Ovary (tissue), 10 donors: ENCODE measurements at regions of chr16 and their contacts with region 1.

Region 1: DNA sequence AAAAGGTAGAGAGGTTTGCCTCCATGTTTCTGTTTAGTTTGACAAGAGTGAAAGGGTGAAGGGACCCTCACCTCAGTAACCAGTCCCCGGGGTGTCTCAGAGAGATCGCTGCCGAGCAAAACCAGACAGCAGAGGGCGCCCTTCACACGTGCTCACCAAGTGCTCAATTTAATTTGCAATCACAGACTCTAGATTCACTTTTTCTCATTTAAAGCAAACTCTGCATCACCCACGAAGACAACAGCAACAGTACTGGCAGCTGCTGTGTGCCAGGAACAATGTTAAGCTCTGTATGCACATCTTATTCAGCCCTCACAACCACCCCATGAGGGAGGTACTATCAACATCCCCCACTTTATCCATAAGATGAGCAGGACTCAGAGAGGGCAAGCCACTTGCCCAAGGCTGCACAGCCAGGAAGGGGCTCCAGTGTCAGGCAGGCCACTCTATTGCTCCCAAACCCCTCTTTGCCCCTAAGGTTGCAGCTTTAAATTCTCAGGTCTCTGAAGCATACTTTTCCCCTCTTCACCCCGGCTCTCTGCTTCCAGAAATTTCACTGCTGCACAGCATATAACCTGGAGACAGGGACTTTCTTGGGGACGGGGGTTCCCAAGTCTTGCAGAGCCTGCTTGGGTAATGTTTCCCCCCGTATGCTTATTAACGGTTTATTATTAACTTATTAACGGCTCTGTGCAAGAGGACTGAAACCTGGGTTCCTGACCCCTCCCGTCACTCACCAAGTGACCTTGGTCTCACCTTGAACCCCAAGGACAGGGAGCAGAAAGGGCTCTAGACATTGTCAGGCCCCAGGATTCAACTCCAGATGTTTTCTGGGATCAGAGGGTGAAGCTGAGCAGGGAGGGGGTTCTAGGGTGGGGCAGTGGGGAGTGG is 70.9 kb downstream of the CNGB1 start:
- DNase-seq: peak; percentile 49 to 77 (median 67)
- H3K4me3 ChIP-seq: no peak overlapping the region
- H3K27ac ChIP-seq: no peak overlapping the region
- H3K4me1 ChIP-seq: no peaks in the 10 kb centered on the region
- H3K27me3 ChIP-seq: no peaks in the 10 kb centered on the region
- CTCF ChIP-seq: peak; percentile 31 to 49 (median 49)
- EP300 ChIP-seq: no peak
- POLR2A ChIP-seq: no peak

Region 2: GRCh38 chr16:57994778-57995177 is 94.8 kb after region 1 on chr16:
- intact Hi-C with region 1: loop called in 1 of 4 experiments (anchors 10 kb)
- DNase-seq: no peak
- H3K4me3 ChIP-seq: no peak overlapping the region
- H3K27ac ChIP-seq: no peak overlapping the region
- H3K4me1 ChIP-seq: peaks cover 3% of the 10 kb centered on the region
- H3K27me3 ChIP-seq: no peaks in the 10 kb centered on the region
- CTCF ChIP-seq: no peak
- EP300 ChIP-seq: no peak
- POLR2A ChIP-seq: no peak

Region 3: GRCh38 chr16:58129097-58129936 is 229.3 kb after region 1 on chr16 and contains the start of gene CFAP20:
- intact Hi-C with region 1: loop called in 1 of 4 experiments (anchors 10 kb)
- DNase-seq: peak; percentile 97 to 99 (median 98)
- H3K4me3 ChIP-seq: peak within 1 kb of the TSS; percentile 77
- H3K27ac ChIP-seq: peak within 1 kb of the TSS; percentile 11 to 71
- H3K4me1 ChIP-seq: peaks cover 9% of the 10 kb centered on the region
- H3K27me3 ChIP-seq: no peaks in the 10 kb centered on the region
- CTCF ChIP-seq: no peak
- EP300 ChIP-seq: no peak
- POLR2A ChIP-seq: peak; percentile 86
- total RNA-seq, gene CFAP20: 20.5 to 38.9 (median 30.0) TPM